MCF 10A (cell line): ENCODE measurements at regions of chr1 and their contacts with region 1.

Region 1: DNA sequence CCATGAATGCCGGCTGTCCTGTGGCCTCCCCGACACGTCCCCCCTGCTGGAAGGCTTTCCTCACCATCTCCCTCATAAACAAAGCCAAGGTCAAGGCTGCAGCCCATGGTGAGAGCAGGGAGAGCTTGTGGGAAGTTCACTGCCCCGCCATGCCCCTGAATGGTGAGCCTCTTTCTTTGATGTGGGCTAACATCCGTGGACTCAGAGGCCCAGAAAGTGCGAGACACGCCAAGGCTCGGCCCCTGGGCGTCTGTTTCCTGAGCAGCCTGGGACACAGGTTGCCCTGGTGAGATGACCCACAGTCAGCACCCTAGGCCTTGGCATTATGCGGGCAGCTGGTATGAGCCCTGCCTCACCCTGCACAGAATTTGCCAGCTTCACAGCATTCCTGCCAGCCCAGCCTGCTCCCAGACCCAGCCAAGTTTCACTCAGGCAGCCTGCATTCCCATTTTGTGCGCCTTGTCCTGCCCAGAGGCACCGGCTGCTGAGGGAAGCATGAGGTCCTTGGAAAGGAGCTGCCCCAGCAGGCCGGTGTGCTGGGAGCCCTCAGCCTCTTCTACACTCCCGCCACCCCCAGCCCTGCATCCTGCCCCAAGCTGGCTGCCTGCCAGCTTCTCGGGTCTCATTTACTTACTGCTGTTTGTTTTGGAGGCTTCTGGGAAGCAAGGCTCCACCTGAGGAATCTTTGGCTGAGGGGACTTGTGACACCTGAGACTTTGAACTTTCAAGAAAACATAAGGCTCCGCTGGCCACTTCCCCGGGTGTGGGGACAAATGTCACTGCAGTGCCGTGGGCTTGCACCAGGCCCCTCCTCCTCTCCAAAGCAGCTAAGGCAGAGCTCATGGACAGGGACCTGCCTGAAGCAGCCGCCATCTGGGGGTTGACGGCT is 31.9 kb downstream of the NEK2 start:
- DNase-seq: peak; percentile 97
- H3K4me3 Mint-ChIP-seq: peak overlapping the region; percentile 45
- H3K27ac Mint-ChIP-seq: peak overlapping the region; percentile 88
- H3K4me1 Mint-ChIP-seq: peaks cover 56% of the 10 kb centered on the region
- H3K27me3 Mint-ChIP-seq: no peaks in the 10 kb centered on the region
- CTCF ChIP-seq: no peak

Region 2: GRCh38 chr1:211551628-211552460 is 91.7 kb before region 1 on chr1:
- CTCF ChIA-PET with region 1: interaction called, 4 read pairs
- POLR2A ChIA-PET with region 1: interaction called, 13 read pairs
- intact Hi-C with region 1: no loop called
- DNase-seq: peak; percentile 97
- H3K4me3 Mint-ChIP-seq: peak overlapping the region; percentile 36
- H3K27ac Mint-ChIP-seq: peak overlapping the region; percentile 65
- H3K4me1 Mint-ChIP-seq: peaks cover 21% of the 10 kb centered on the region
- H3K27me3 Mint-ChIP-seq: no peaks in the 10 kb centered on the region
- CTCF ChIP-seq: no peak

Region 3: DNA sequence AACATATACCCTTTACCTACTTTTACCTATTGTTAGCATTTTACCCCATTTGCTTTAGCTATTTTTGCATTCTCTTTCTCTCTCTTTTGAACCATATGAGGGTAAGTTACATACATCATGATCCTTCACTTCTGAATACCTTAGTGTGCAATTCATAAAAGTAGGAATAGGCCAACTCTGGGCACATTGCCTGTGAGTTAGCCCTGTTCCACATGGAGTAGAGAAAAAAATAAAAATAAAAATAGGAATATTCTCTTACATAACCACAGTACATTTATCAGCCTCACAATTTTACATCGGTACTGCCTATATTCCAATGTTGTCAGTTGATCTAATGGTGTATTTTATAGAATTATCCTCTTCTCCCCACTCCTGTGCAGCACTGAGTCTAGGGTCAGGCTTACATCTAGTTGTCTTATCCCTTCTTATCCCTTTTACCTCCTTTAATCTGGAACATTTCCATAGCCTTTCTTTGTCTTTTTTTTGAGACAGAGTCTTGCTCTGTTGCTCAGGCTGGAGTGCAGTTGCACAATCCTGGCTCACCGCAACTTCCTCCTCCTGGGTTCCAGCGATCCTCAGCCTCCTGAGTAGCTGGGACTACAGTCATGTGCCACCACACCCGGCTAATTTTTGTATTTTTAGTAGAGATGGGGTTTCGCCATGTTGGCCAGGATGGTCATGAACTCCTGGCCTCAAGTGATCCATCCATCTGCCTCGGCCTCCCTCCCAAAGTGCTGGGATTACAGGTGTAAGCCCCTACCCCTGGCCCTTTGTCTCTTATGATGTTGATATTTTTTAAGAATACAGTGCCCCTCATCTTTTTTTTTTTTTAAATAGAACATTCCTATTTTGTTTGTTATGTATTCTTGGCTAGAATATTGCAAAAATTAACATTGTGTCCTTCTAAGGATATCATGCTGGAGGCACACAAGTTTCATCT is 53.5 kb before region 1 on chr1:
- CTCF ChIA-PET with region 1: interaction called, 5 read pairs
- POLR2A ChIA-PET with region 1: interaction called, 6 read pairs
- intact Hi-C with region 1: loop called (anchors 2 kb)
- DNase-seq: peak; percentile 95
- H3K4me3 Mint-ChIP-seq: no peak overlapping the region
- H3K27ac Mint-ChIP-seq: peak overlapping the region; percentile 65
- H3K4me1 Mint-ChIP-seq: peaks cover 30% of the 10 kb centered on the region
- H3K27me3 Mint-ChIP-seq: no peaks in the 10 kb centered on the region
- CTCF ChIP-seq: no peak

Region 4: GRCh38 chr1:211606914-211607755 is 36.4 kb before region 1 on chr1:
- CTCF ChIA-PET with region 1: interaction called, 10 read pairs
- POLR2A ChIA-PET with region 1: interaction called, 81 read pairs
- intact Hi-C with region 1: no loop called
- DNase-seq: peak; percentile 73
- H3K4me3 Mint-ChIP-seq: no peak overlapping the region
- H3K27ac Mint-ChIP-seq: no peak overlapping the region
- H3K4me1 Mint-ChIP-seq: peaks cover 40% of the 10 kb centered on the region
- H3K27me3 Mint-ChIP-seq: no peaks in the 10 kb centered on the region
- CTCF ChIP-seq: no peak

Region 5: GRCh38 chr1:211613093-211613947 is 30.2 kb before region 1 on chr1:
- CTCF ChIA-PET with region 1: interaction called, 12 read pairs
- POLR2A ChIA-PET with region 1: interaction called, 81 read pairs
- intact Hi-C with region 1: no loop called
- DNase-seq: peak; percentile 100
- H3K4me3 Mint-ChIP-seq: peak overlapping the region; percentile 33
- H3K27ac Mint-ChIP-seq: peak overlapping the region; percentile 61
- H3K4me1 Mint-ChIP-seq: peaks cover 37% of the 10 kb centered on the region
- H3K27me3 Mint-ChIP-seq: no peaks in the 10 kb centered on the region
- CTCF ChIP-seq: no peak